ENCODE measurements at regions of chr6 and their contacts with region 1.

Region 1: DNA sequence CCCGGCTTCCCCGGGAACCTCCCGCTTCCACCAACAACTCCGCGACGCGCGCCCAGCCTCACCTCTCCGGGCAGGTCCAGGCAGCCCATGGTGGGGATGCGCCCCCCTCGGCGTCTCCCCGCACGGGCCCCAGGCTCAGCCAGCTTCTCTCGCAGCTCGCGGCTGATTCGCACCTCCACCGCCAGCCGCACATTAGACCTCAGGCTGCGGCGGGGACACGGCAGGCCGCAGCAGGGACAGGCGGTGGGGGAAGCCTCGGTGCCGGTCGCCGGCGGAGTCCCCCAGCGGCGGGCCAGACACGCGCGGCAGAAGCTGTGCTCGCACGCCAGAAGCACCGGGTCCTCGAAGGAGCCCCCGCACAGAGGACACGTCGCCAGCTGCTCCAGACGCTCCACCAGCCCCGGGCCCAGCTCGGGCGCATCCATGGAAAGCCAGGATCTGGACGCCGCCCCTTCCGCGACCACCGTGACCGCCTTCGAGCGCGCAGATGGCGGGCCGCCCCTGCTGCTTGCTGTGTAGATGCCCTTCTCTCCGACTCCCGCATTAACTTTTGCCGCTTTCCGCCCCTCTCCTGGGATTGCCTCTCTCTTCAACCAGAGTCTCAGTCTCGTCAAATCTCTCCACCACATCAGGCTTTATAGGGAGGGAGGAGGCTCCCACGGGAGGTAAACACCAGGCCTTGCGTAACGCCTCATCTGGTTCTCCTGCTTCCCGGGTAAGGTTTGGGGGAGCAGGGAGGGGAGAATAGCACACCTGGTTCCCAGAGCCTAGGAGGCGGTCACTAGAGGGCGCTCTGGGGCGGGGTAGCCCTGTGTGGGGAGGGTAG is at the start of gene RNF39:
- DNase-seq: peak; percentile 79
- H3K4me3 ChIP-seq: peak within 1 kb of the TSS; percentile 74 to 77 (median 77)
- H3K27ac ChIP-seq: peak within 1 kb of the TSS; percentile 62
- H3K4me1 ChIP-seq: peaks cover 28% of the 10 kb centered on the region
- H3K27me3 ChIP-seq: peaks cover 9% of the 10 kb centered on the region
- CTCF ChIP-seq: peak in 1 of 2 donors; percentile 63
- total RNA-seq, gene RNF39: 2.5 to 5.4 TPM

Region 2: DNA sequence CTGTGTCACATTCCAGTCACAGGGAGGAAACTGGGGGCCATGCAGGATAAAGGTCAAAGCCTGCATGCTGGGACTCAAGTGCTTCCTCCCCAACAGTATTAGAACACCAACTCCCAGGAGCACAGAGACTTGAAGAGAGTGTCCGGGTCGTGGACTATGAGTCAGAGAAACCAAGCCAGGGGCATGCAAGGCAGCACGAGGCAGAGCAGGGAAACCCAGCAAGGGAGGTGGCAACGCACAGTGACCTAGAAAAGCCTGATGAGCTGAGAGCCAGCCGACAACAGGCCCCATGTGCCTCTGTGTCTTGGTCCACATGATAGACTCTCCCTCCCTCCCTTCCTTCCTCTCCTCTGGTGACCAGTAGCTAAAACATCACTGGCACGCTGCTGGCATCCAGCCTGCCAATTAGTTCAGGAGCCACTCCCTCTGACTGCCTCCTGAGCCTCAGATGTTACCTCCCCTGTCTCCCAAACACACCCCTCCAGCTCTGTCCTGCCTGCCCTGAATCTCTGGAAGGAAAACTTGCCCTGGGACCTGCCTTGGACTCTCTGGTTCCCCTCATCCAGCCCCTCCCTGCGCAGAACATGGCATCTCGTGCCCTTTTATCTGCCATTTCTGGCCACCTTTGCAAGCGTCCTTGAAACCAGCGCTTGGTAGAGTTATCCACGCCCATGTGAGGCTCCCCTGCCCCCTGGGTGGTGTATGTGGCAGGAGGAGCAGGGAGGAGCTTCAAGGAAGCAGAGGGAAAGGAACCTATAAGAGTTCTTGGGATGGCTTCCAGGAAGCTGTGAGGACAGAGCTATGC is 16.4 kb after region 1 on chr6:
- CTCF ChIA-PET with region 1: no interaction called
- dilution Hi-C with region 1: no loop called
- in situ Hi-C with region 1: no loop called
- intact Hi-C with region 1: no loop called
- DNase-seq: no peak
- H3K4me3 ChIP-seq: no peak overlapping the region
- H3K27ac ChIP-seq: no peak overlapping the region
- H3K4me1 ChIP-seq: peaks cover 8% of the 10 kb centered on the region
- H3K27me3 ChIP-seq: no peaks in the 10 kb centered on the region
- CTCF ChIP-seq: no peak

Region 3: GRCh38 chr6:30175765-30176164 is 100.4 kb after region 1 on chr6:
- CTCF ChIA-PET with region 1: no interaction called
- dilution Hi-C with region 1: loop called (anchors 5 kb)
- in situ Hi-C with region 1: no loop called
- intact Hi-C with region 1: no loop called
- DNase-seq: no peak
- H3K4me3 ChIP-seq: no peak overlapping the region
- H3K27ac ChIP-seq: no peak overlapping the region
- H3K4me1 ChIP-seq: no peaks in the 10 kb centered on the region
- H3K27me3 ChIP-seq: peaks cover 18% of the 10 kb centered on the region
- CTCF ChIP-seq: no peak